ENCODE measurements at regions of chr7 and their contacts with region 1.

Region 1: DNA sequence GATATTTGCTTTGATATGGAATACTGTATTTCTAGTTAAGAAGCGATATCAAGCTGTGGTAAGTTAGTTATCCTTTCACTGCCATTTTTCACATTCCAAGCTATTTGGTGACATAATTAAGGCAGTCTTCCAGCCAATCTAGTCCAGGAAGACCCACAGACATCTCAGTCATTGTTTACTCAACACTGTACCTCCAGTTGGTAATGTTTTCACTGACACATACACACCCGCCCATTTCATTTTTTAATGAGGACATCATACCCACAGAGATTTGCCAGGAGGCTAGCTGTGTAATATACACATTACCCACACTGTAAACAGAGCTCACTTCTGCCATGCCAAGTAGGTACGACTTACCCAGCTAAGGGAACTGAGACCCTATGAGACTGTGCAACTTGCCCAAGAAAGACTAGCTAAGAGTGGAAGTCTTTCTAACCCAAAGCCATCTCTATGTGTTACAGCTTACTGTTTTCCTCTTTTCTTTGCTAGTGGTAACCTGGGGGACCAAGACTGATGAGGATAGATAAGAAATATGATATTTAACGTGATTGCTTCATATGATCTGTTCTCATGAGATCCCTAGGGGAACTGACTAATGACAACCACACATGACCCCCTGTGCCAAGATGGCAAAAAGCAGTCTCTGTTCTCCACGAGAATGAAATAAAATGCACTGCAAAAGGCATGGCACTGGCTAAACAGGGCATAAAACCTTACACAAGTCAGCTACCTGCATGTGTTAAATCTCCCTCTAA is 179.0 kb downstream of the DGKI start:
- DNase-seq: no peak
- H3K4me3 ChIP-seq: no peak overlapping the region
- H3K27ac ChIP-seq: no peak overlapping the region
- H3K4me1 ChIP-seq: peaks cover 0 to 16% (median 6%) of the 10 kb centered on the region in 4 donors
- H3K27me3 ChIP-seq: no peaks in the 10 kb centered on the region
- CTCF ChIP-seq: no peak
- EP300 ChIP-seq: no peak
- POLR2A ChIP-seq: no peak

Region 2: DNA sequence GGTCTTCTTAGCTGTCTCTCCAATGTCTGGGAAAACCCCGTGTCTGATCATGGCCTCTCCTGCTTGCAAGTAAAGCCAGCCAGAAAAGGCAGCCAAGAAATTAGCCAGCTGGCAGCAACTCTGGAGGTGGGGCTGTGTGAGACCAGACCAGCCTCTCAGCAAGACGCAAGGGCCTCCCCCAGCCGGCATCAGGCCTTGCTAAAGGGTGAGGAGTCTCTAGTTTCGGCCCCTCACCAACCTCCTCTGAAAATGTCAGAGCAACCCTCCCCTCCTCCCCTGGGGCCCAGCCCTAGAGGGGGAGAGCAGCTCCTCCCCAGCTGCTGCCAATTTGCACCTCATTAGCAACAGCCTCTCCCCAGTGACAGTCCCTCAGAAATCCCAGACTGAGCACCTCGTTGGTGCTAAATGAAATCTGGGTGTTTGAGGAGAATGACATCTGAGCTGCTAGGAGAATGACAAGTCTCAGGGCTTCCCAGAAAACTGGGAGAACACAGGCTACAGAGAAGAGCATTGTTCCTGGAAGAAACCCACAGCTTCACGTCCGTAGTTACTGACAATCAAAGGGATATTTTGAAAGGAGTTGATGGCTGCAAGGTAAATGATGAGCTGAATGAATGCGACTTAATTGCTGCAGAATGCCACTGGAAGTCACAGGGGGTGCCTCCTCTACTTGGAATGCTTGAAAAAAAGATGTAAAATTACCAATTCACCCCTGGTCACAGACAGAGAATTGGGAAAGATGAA is 153.0 kb after region 1 on chr7:
- intact Hi-C with region 1: loop called (anchors 10 kb)
- DNase-seq: no peak
- H3K4me3 ChIP-seq: peak overlapping the region in 1 of 4 donors; percentile 5
- H3K27ac ChIP-seq: peak overlapping the region in 1 of 4 donors; percentile 44
- H3K4me1 ChIP-seq: peaks cover 9 to 16% (median 12%) of the 10 kb centered on the region in 4 donors
- H3K27me3 ChIP-seq: no peaks in the 10 kb centered on the region
- CTCF ChIP-seq: no peak
- EP300 ChIP-seq: no peak
- POLR2A ChIP-seq: no peak